CD4-positive, alpha-beta memory T cell (primary cell): ENCODE measurements at regions of chr7 and their contacts with region 1.

Region 1: GRCh38 chr7:55469271-55469681 is 103.0 kb downstream of the VOPP1 start:
- DNase-seq: peak; percentile 60 to 82 (median 78)
- H3K4me3 ChIP-seq: no peak overlapping the region
- H3K4me3 Mint-ChIP-seq: peak overlapping the region in 7 of 8 donors; percentile 28 to 81 (median 72)
- H3K27ac ChIP-seq: peak overlapping the region; percentile 42
- H3K27ac Mint-ChIP-seq: peak overlapping the region; percentile 88 to 95 (median 94)
- H3K4me1 ChIP-seq: peaks cover 91% of the 10 kb centered on the region
- H3K4me1 Mint-ChIP-seq: peaks cover 49 to 84% (median 74%) of the 10 kb centered on the region in 4 donors
- H3K27me3 ChIP-seq: no peaks in the 10 kb centered on the region
- H3K27me3 Mint-ChIP-seq: no peaks in the 10 kb centered on the region

Region 2: DNA sequence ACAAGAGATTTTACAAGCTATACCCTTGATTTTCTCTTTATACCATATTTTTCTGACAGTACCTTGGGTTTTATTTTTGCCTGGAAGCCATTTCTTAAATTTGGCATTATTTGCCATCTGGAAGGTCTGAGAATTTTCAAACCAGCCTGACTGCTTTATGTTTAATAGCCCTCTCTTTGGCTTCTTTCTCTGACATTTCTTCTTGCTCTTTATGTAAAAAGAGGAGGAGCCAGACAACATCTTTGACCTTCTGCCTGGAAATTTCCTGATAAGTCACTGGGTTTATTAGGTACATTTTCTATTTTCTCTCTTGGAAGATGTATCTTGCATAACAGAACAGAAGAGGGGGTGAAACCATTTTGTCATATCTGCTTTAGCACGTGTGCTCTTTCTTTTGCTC is 24.5 kb before region 1 on chr7:
- CTCF ChIA-PET with region 1: interaction called, 10 read pairs
- POLR2A ChIA-PET with region 1: interaction called, 7 read pairs
- intact Hi-C with region 1: no loop called
- DNase-seq: no peak
- H3K4me3 ChIP-seq: no peak overlapping the region
- H3K4me3 Mint-ChIP-seq: no peak overlapping the region
- H3K27ac ChIP-seq: no peak overlapping the region
- H3K27ac Mint-ChIP-seq: peak overlapping the region in 3 of 7 donors; percentile 1 to 32 (median 18)
- H3K4me1 ChIP-seq: peaks cover 26% of the 10 kb centered on the region
- H3K4me1 Mint-ChIP-seq: peaks cover 24 to 41% (median 32%) of the 10 kb centered on the region in 4 donors
- H3K27me3 ChIP-seq: no peaks in the 10 kb centered on the region
- H3K27me3 Mint-ChIP-seq: no peaks in the 10 kb centered on the region

Region 3: GRCh38 chr7:55452971-55453370 is 16.3 kb before region 1 on chr7:
- CTCF ChIA-PET with region 1: interaction called, 3 read pairs
- POLR2A ChIA-PET with region 1: interaction called, 13 read pairs
- intact Hi-C with region 1: loop called (anchors 2 kb)
- DNase-seq: no peak
- H3K4me3 ChIP-seq: no peak overlapping the region
- H3K4me3 Mint-ChIP-seq: no peak overlapping the region
- H3K27ac ChIP-seq: no peak overlapping the region
- H3K27ac Mint-ChIP-seq: peak overlapping the region in 4 of 7 donors; percentile 6 to 76 (median 52)
- H3K4me1 ChIP-seq: peaks cover 11% of the 10 kb centered on the region
- H3K4me1 Mint-ChIP-seq: peaks cover 27 to 59% (median 44%) of the 10 kb centered on the region in 4 donors
- H3K27me3 ChIP-seq: no peaks in the 10 kb centered on the region
- H3K27me3 Mint-ChIP-seq: no peaks in the 10 kb centered on the region

Region 4: GRCh38 chr7:55458351-55458750 is 10.9 kb before region 1 on chr7:
- CTCF ChIA-PET with region 1: interaction called, 3 read pairs
- POLR2A ChIA-PET with region 1: interaction called, 13 read pairs
- intact Hi-C with region 1: loop called (anchors 2 kb)
- DNase-seq: no peak
- H3K4me3 ChIP-seq: no peak overlapping the region
- H3K4me3 Mint-ChIP-seq: no peak overlapping the region
- H3K27ac ChIP-seq: no peak overlapping the region
- H3K27ac Mint-ChIP-seq: peak overlapping the region in 2 of 7 donors; percentile 40 to 65
- H3K4me1 ChIP-seq: peaks cover 16% of the 10 kb centered on the region
- H3K4me1 Mint-ChIP-seq: peaks cover 29 to 68% (median 46%) of the 10 kb centered on the region in 4 donors
- H3K27me3 ChIP-seq: no peaks in the 10 kb centered on the region
- H3K27me3 Mint-ChIP-seq: no peaks in the 10 kb centered on the region

Region 5: GRCh38 chr7:55534175-55534915 is 65.1 kb after region 1 on chr7:
- CTCF ChIA-PET with region 1: interaction called, 9 read pairs
- POLR2A ChIA-PET with region 1: interaction called, 49 read pairs
- intact Hi-C with region 1: loop called (anchors 1 kb)
- DNase-seq: peak in 3 of 5 donors; percentile 27 to 84 (median 33)
- H3K4me3 ChIP-seq: peak overlapping the region in 1 of 2 donors; percentile 22
- H3K4me3 Mint-ChIP-seq: peak overlapping the region; percentile 71 to 88 (median 76)
- H3K27ac ChIP-seq: peak overlapping the region; percentile 60
- H3K27ac Mint-ChIP-seq: peak overlapping the region; percentile 92 to 97 (median 95)
- H3K4me1 ChIP-seq: peaks cover 96% of the 10 kb centered on the region
- H3K4me1 Mint-ChIP-seq: peaks cover 82 to 97% (median 91%) of the 10 kb centered on the region in 4 donors
- H3K27me3 ChIP-seq: no peaks in the 10 kb centered on the region
- H3K27me3 Mint-ChIP-seq: no peaks in the 10 kb centered on the region

Region 6: GRCh38 chr7:55593515-55594318 is 124.4 kb after region 1 on chr7:
- CTCF ChIA-PET with region 1: interaction called, 6 read pairs
- POLR2A ChIA-PET with region 1: interaction called, 3 read pairs
- intact Hi-C with region 1: loop called (anchors 1 kb)
- DNase-seq: peak; percentile 50 to 67 (median 55)
- H3K4me3 ChIP-seq: no peak overlapping the region
- H3K4me3 Mint-ChIP-seq: no peak overlapping the region
- H3K27ac ChIP-seq: no peak overlapping the region
- H3K27ac Mint-ChIP-seq: no peak overlapping the region
- H3K4me1 ChIP-seq: peaks cover 17% of the 10 kb centered on the region
- H3K4me1 Mint-ChIP-seq: peaks cover 7 to 24% (median 15%) of the 10 kb centered on the region in 4 donors
- H3K27me3 ChIP-seq: no peaks in the 10 kb centered on the region
- H3K27me3 Mint-ChIP-seq: peaks cover 4 to 6% of the 10 kb centered on the region in 2 donors

Region 7: DNA sequence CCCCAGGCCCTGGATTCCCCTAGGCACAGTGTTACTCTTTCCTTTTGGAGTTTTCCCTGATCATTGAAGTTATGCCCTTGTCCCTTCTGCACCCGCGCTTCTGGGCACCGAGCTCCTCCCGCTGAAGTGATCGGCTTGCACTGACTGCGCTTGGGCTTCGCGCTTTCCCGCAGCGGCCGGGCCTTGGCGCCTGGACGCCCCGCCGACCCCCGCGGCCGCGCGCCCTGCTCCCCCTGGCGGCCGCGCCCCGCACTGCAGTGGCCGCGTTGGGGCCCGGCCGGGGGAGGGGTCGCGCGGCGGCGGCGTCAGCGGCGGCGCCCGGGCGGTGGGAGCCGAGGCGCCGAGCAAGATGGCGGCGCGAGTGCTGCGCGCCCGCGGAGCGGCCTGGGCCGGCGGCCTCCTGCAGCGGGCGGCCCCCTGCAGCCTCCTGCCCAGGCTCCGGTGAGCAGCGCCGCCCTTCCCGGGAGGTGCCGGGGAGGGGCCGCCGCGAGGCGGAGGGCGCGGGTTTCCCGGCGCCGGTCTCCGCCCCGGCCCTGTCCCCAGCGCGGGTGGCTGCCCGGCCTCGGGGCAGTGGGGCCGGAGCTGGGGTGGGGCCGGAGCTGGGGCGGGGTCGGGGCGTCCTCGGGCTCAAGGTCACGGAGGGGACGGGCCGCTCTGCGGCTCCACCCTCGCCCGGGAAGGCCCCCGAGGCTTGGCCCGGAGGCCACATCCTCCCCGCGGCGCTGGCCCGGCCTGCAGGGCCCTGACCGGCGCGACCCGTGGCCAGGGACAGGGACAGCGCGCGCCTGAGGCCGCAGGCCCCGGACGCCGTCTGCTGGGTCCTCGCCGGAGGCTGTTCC is 495.2 kb after region 1 on chr7 and contains the start of gene NIPSNAP2:
- CTCF ChIA-PET with region 1: no interaction called
- POLR2A ChIA-PET with region 1: interaction called, 3 read pairs
- intact Hi-C with region 1: loop called (anchors 10 kb)
- DNase-seq: peak; percentile 55 to 77 (median 65)
- H3K4me3 ChIP-seq: peak within 1 kb of the TSS; percentile 42 to 62
- H3K4me3 Mint-ChIP-seq: peak within 1 kb of the TSS; percentile 82 to 90 (median 86)
- H3K27ac ChIP-seq: peak within 1 kb of the TSS; percentile 76
- H3K27ac Mint-ChIP-seq: peak within 1 kb of the TSS; percentile 89 to 94 (median 94)
- H3K4me1 ChIP-seq: peaks cover 19% of the 10 kb centered on the region
- H3K4me1 Mint-ChIP-seq: peaks cover 29 to 49% (median 32%) of the 10 kb centered on the region in 4 donors
- H3K27me3 ChIP-seq: no peaks in the 10 kb centered on the region
- H3K27me3 Mint-ChIP-seq: no peaks in the 10 kb centered on the region
- total RNA-seq, gene NIPSNAP2: 29.0 to 33.3 TPM